Naive thymus-derived CD4-positive, alpha-beta T cell (primary cell): ENCODE measurements at regions of chr17 and their contacts with region 1.

Region 1: DNA sequence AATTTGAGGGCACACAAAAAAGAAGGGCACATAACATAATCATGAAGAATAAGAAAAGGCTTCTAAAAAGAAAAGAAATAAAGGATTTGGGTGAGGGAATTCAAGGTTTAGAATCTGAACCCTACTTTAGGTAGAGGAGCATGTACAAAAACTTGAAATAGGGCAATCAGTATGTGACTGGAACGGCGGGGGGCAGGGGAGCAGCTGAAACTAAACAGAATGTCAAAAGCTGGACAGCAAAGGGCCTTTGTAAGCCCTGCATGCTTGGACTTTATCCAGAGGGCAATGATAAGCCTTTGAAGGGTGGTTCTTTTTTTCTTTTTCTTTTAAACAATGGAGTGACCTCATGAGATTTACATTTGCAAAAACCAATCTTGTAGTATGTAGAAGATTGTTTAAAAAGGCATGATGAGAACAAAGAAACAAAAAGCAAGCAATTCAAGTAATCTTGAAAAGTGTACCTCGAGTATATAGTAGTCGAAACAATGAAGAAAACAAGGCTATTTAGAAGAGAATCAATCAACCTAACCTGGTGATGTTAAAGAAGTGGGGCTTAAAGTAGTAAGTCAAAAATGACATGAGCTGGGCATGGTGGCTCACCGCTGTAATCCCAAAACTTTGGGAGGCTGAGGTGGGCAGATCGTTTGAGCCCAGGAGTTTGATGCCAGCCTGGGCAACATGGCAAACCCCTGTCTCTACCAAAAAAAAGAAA is 46.7 kb upstream of the ANKFY1 start:
- DNase-seq: no peak
- ATAC-seq: no peak
- H3K4me3 ChIP-seq: no peak overlapping the region
- H3K4me3 Mint-ChIP-seq: peak overlapping the region in 4 of 10 donors; percentile 24 to 41 (median 26)
- H3K27ac ChIP-seq: no peak overlapping the region
- H3K27ac Mint-ChIP-seq: peak overlapping the region in 8 of 9 donors; percentile 2 to 79 (median 60)
- H3K4me1 ChIP-seq: peaks cover 18 to 36% of the 10 kb centered on the region in 2 donors
- H3K4me1 Mint-ChIP-seq: peaks cover 46 to 73% (median 68%) of the 10 kb centered on the region in 7 donors
- H3K27me3 ChIP-seq: no peaks in the 10 kb centered on the region
- H3K27me3 Mint-ChIP-seq: no peaks in the 10 kb centered on the region

Region 2: DNA sequence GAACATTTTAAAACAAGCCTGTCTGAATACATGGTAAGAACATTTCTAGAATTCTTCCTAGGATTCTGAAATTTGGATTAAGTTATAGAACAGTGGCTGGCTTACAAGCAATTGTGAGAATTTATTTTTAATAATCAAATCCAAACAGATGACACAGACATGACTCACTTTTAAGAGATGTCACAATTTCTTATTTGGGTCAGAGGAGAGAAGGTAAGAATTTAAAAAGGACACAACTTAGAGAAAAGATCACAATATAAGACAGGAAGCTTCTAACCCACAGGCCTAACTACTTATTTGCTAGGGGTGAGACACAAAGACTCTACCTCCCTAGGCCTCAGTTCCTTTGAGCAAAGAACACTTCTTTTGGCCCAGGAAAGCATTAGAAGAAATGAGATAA is 200.4 kb before region 1 on chr17:
- CTCF ChIA-PET with region 1: no interaction called
- POLR2A ChIA-PET with region 1: no interaction called
- intact Hi-C with region 1: no loop called
- DNase-seq: no peak
- ATAC-seq: no peak
- H3K4me3 ChIP-seq: no peak overlapping the region
- H3K4me3 Mint-ChIP-seq: peak overlapping the region in 4 of 10 donors; percentile 13 to 35 (median 28)
- H3K27ac ChIP-seq: no peak overlapping the region
- H3K27ac Mint-ChIP-seq: peak overlapping the region in 8 of 9 donors; percentile 7 to 87 (median 56)
- H3K4me1 ChIP-seq: no peaks in the 10 kb centered on the region
- H3K4me1 Mint-ChIP-seq: peaks cover 8 to 29% (median 20%) of the 10 kb centered on the region in 7 donors
- H3K27me3 ChIP-seq: no peaks in the 10 kb centered on the region
- H3K27me3 Mint-ChIP-seq: no peaks in the 10 kb centered on the region

Region 3: GRCh38 chr17:4297351-4297750 is 13.2 kb before region 1 on chr17:
- CTCF ChIA-PET with region 1: no interaction called
- POLR2A ChIA-PET with region 1: no interaction called
- intact Hi-C with region 1: loop called in 1 of 2 experiments (anchors 2 kb)
- DNase-seq: no peak
- ATAC-seq: no peak
- H3K4me3 ChIP-seq: no peak overlapping the region
- H3K4me3 Mint-ChIP-seq: no peak overlapping the region
- H3K27ac ChIP-seq: no peak overlapping the region
- H3K27ac Mint-ChIP-seq: peak overlapping the region in 4 of 9 donors; percentile 4 to 65 (median 24)
- H3K4me1 ChIP-seq: no peaks in the 10 kb centered on the region
- H3K4me1 Mint-ChIP-seq: peaks cover 10 to 38% (median 23%) of the 10 kb centered on the region in 7 donors
- H3K27me3 ChIP-seq: no peaks in the 10 kb centered on the region
- H3K27me3 Mint-ChIP-seq: no peaks in the 10 kb centered on the region